ENCODE measurements at regions of chr7 and their contacts with region 1.

Region 1: DNA sequence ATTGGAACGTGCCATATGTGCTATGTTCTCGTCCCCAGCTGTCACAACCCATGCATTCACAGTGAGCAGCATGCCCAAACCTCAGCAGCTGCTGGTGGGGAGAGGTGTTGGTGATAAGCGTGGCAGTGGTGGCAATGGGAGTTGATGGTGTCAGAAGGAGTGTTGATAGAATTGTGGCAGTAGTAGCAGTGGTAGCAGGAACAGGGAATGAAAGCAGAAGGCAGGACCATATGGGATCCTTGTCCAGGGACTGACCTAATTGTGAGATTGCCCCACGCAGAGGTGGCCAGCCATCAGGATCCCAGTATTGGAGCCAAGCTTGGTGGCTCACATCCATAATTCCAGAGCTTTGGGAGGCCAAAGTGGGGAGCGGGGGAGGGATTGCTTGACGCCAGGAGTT is 276.3 kb downstream of the GALNT17 start:
- DNase-seq: peak; percentile 66 to 75
- ATAC-seq: peak; percentile 88 to 98 (median 95)
- H3K4me3 ChIP-seq: no peak overlapping the region
- H3K27ac ChIP-seq: peak overlapping the region in 5 of 10 donors; percentile 45 to 72 (median 57)
- H3K4me1 ChIP-seq: peaks cover 0 to 28% (median 10%) of the 10 kb centered on the region in 9 donors
- H3K27me3 ChIP-seq: no peaks in the 10 kb centered on the region
- CTCF ChIP-seq: no peak

Region 2: GRCh38 chr7:71325151-71325550 is 83.1 kb before region 1 on chr7:
- intact Hi-C with region 1: loop called in 1 of 10 experiments (anchors 10 kb)
- DNase-seq: no peak
- ATAC-seq: no peak
- H3K4me3 ChIP-seq: no peak overlapping the region
- H3K27ac ChIP-seq: no peak overlapping the region
- H3K4me1 ChIP-seq: peaks cover 0 to 34% (median 12%) of the 10 kb centered on the region in 9 donors
- H3K27me3 ChIP-seq: no peaks in the 10 kb centered on the region
- CTCF ChIP-seq: no peak

Region 3: DNA sequence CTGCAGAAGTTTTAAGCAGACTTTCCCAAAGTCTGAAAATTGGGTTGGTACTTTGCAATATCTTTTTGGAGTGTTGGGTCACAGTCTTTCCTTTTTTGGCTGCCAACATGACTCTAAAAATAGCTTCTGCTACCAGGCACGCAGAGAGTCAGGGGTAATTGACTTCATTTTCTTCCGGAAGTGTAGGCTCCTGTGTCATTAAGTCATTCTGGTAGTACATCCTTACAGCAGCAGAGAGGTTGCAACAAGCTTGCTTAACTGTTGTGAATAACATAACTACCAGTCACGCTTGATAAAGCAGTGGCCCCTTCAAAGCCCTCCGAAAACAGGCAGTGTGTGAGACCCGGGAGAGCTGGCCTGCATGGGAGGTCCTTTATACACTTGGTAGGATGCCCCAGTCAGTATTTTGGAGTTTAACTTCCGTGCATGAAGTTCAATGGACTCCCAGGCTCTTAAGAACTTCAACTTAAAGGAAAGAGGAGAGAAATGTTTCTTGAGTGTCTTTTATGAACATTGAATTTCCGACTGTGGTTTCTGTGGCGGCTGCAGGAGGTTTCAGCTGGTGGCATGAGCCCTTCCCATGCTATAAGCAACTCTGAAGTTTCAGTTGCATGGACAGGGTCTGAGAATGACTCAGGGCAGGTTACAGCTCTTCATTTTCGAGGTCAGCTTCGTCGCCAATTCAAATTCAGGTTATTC is 34.4 kb after region 1 on chr7:
- intact Hi-C with region 1: no loop called
- DNase-seq: no peak
- ATAC-seq: peak in 1 of 8 donors; percentile 44
- H3K4me3 ChIP-seq: no peak overlapping the region
- H3K27ac ChIP-seq: no peak overlapping the region
- H3K4me1 ChIP-seq: peaks cover 0 to 10% (median 0%) of the 10 kb centered on the region in 9 donors
- H3K27me3 ChIP-seq: no peaks in the 10 kb centered on the region
- CTCF ChIP-seq: no peak